Activated CD4-positive, alpha-beta memory T cell treated with anti-CD3 and anti-CD28 coated beads for 36 hours (primary cell): ENCODE measurements at regions of chr6 and their contacts with region 1.

Region 1: DNA sequence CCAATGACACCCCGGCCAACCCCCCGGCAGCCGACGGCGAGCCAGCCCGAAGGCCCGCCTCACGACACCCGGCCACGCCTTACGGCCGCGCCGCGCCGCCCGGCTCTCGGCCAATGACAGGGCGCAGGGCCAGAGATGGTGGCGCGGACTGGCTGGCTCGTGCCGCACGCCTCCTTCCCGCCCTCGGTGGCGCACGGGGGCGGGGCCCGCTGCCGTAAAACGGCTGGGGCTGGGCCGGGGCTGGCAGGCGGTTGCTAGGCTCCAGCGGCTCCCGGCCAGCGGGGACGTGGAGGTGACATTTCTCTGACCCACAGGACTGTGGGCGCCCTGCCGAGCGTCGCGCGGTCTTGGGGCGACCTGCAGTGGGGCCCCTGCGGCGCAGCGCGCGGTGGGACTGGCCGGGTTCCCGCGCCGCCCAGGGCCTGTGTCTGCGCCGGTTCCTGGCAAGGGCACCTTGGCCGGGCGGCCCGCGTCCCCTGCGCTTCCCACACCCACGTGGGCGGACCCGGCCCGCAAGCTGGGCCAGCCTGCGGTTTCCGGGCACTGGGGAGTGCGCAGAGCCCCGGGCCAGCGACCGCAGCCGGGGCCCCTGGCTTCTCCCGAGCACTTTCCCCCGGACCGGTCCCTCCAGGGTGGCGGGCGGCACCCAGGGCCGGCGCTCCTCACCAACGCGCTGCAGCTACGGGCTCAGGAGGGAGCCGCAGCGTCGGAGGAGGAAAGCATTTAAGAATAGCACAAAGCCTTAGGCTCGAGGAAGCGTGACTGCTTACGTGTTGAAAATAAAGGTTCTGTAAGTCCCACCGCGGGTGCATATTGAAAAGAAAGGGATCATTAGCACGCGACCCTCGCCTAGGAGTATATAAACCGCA is at the start of gene MPC1:
- DNase-seq: peak; percentile 96
- H3K4me3 Mint-ChIP-seq: peak within 1 kb of the TSS; percentile 87
- H3K27ac Mint-ChIP-seq: peak within 1 kb of the TSS; percentile 74
- H3K4me1 Mint-ChIP-seq: peaks cover 7% of the 10 kb centered on the region
- H3K27me3 Mint-ChIP-seq: no peaks in the 10 kb centered on the region
- total RNA-seq, gene MPC1: 22.5 to 22.9 TPM

Region 2: DNA sequence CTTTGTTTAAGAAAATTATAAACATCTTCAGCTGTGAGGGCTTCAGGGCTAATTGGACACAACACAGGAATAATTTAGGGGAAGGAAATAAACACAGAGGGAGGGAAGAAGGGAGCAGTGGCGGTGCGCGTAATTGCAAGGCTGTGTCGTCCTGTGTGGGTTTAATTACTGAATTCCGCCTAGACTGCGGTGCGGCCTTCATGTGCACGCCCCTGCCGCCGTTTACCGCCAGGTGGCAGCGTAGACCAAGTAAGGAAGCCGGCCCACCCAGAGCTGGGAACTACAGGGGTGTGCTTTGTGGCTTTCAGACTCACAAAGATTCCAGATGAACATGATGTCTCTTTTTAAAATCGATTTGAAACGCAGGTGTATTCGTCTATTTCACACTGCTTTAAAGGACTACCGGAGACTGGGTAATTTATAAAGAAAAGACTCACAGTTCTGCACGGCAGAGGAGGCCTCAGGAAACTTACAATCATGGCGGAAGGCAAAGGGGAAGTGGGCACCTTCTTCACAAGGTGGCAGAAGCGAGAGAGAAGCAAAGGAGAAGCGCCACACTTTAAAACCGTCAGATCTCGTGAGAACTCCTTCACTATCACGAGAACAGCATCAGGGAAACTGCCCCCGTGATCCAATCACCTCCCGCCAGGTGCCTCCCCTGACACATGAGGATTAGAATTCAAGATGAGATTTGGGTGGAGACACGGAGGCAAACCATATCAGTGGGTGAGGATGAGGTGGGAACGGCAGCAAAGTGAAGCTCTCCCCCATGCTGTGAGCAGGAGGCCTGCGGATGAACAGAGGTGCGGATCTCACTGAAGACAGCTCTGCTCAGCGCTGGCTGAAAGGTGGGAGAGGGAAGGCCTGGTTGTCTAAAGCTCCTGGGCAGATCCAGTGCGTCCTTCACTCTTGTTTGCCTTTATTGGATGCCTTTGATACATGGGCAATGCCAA is 498.1 kb before region 1 on chr6:
- CTCF ChIA-PET with region 1: no interaction called
- POLR2A ChIA-PET with region 1: no interaction called
- intact Hi-C with region 1: loop called (anchors 10 kb)
- DNase-seq: peak; percentile 75
- H3K4me3 Mint-ChIP-seq: no peak overlapping the region
- H3K27ac Mint-ChIP-seq: no peak overlapping the region
- H3K4me1 Mint-ChIP-seq: peaks cover 6% of the 10 kb centered on the region
- H3K27me3 Mint-ChIP-seq: peaks cover 9% of the 10 kb centered on the region

Region 3: GRCh38 chr6:166275714-166276166 is 107.4 kb before region 1 on chr6:
- CTCF ChIA-PET with region 1: interaction called, 11 read pairs
- POLR2A ChIA-PET with region 1: no interaction called
- intact Hi-C with region 1: loop called (anchors 1 kb)
- DNase-seq: peak; percentile 84
- H3K4me3 Mint-ChIP-seq: no peak overlapping the region
- H3K27ac Mint-ChIP-seq: no peak overlapping the region
- H3K4me1 Mint-ChIP-seq: peaks cover 5% of the 10 kb centered on the region
- H3K27me3 Mint-ChIP-seq: no peaks in the 10 kb centered on the region

Region 4: GRCh38 chr6:166313255-166314070 is 69.7 kb before region 1 on chr6:
- CTCF ChIA-PET with region 1: interaction called, 46 read pairs
- POLR2A ChIA-PET with region 1: no interaction called
- intact Hi-C with region 1: loop called (anchors 1 kb)
- DNase-seq: peak; percentile 65
- H3K4me3 Mint-ChIP-seq: no peak overlapping the region
- H3K27ac Mint-ChIP-seq: no peak overlapping the region
- H3K4me1 Mint-ChIP-seq: no peaks in the 10 kb centered on the region
- H3K27me3 Mint-ChIP-seq: peaks cover 18% of the 10 kb centered on the region

Region 5: DNA sequence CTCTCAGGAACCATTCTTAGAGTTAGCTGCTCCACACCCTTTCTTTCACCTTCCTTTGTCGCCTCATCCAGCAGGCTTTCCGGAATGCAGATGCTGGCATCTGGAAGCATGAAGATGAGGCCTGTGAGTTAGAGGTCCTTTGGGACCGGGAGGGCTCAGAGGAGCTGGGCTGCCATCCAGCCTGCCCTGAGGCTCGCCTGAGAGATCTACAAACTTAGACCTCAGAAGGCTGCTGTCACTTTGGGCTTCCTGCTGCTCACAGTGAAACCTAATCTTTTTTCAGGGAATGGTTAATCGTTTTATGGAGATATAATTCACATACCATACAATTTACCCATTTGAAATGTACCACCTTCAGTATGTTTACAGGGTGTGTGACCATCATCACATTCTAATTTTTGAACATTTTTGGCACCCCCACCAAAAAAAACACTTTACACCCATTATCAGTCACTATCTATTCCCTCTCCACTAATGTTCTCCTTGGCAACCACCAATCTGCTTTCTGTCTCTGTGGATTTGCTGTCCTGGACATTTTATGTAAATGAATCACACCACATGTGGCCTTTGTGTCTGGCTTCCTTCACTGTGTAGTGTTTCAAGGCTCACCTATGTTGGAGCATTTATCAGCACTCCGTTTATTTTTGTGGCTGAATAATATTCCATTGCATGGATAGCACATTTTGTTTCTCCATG is 19.6 kb after region 1 on chr6:
- CTCF ChIA-PET with region 1: interaction called, 55 read pairs
- POLR2A ChIA-PET with region 1: no interaction called
- intact Hi-C with region 1: loop called (anchors 2 kb)
- DNase-seq: no peak
- H3K4me3 Mint-ChIP-seq: no peak overlapping the region
- H3K27ac Mint-ChIP-seq: no peak overlapping the region
- H3K4me1 Mint-ChIP-seq: peaks cover 3% of the 10 kb centered on the region
- H3K27me3 Mint-ChIP-seq: peaks cover 2% of the 10 kb centered on the region

Region 6: DNA sequence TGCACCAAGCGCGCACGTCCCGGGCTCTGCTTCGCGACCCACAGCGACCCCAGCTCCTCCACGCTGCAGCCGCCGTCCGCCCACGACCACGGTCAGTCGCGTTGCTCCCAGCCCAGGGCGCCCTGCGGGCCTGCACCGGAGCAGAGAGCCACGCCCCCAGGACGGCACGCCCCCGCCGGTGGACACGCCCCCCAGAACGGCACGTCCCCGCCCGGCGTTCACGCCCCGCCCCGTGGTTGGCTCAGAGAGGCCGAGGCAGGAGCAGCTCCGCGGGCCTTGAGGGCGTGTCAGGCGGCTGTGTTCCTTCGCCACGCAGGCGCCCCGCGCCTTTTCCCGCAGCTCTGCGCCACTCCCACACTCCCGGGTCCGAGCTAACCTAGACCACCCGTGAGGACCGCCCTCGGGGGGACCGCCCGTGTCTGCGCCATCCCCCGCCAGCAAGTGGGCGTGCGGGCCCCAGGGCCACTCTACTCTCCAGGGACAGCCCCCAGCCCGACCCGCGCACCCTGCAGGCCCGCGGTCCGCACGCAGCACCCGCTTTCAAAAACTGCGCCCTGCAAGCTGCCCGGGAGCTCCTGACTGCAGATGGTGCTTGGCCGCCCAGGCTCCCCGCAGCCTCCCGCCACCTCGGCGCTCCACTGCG is 573.4 kb after region 1 on chr6 and contains the start of gene RNASET2:
- CTCF ChIA-PET with region 1: no interaction called
- POLR2A ChIA-PET with region 1: no interaction called
- intact Hi-C with region 1: loop called (anchors 2 kb)
- DNase-seq: peak; percentile 99
- H3K4me3 Mint-ChIP-seq: peak within 1 kb of the TSS; percentile 89
- H3K27ac Mint-ChIP-seq: peak within 1 kb of the TSS; percentile 94
- H3K4me1 Mint-ChIP-seq: peaks cover 73% of the 10 kb centered on the region
- H3K27me3 Mint-ChIP-seq: no peaks in the 10 kb centered on the region
- total RNA-seq, gene RNASET2: 62.5 to 66.1 TPM